ENCODE measurements at regions of chr15 and their contacts with region 1.

Region 1: DNA sequence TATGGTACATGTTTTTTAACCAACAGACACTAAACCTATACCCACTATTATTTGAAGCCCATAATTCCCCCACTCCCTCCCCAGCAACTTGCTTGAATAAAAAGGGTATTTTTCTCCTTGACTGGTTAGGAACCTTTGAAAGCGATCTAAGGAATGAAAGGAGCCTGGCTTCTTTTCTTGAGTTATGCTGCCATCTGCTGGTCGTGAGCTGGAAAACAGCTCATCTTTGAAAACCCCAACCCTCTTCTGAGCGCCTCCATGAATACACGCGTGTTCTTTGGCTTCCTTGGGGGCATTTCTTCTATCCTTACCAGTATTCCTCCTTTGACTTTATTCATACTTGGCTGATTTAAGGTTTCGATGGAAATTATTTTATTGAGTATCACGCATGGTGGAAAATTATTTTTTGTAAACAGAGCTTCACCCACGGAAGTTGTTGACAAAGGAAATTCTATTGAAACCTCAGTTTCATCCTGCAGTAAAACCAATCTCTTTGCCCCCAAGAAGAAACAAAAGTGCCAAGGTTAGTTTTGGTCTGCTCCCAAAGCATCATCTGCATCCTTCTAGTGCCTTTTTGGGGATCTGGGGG is 171.6 kb downstream of the SV2B start:
- DNase-seq: peak; percentile 57

Region 2: DNA sequence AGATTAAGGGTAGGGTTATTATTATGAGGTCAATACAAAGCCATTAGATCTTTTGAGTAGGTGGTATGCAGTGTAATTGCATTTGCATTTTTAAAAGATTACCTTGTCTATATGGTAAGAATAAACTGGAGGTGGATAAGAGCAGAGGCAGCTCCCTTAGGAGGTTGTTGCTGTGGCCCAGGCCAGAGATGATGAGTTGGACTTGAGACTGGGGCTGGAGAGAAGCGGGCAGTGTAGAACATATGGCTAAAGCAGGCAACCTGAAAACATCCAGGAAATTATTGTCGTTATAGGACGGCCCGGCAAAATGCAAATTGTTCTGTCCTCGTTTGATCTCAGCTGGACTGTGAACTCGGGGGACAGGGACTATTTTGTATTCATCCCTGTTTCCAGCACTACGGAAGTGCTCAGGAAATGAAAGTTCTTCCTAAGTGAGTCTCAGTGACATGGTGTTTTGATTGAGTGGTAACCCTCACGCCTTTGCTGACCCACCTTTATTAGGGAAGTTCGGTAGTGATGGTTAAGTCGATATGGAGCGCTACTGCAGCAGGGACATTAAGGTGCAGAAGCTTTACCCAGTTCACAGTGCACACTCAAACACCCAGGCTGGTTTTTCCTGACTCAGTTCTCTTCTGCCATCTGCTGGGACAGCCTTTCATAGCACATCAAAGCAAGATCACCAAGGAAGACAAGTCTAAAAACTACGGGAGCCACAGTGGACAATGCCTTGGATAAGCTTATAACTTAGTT is 222.1 kb before region 1 on chr15:
- in situ Hi-C with region 1: loop called (anchors 25 kb)
- DNase-seq: peak; percentile 65